Testis (tissue), 5 donors: ENCODE measurements at regions of chr3 and their contacts with region 1.

Region 1: DNA sequence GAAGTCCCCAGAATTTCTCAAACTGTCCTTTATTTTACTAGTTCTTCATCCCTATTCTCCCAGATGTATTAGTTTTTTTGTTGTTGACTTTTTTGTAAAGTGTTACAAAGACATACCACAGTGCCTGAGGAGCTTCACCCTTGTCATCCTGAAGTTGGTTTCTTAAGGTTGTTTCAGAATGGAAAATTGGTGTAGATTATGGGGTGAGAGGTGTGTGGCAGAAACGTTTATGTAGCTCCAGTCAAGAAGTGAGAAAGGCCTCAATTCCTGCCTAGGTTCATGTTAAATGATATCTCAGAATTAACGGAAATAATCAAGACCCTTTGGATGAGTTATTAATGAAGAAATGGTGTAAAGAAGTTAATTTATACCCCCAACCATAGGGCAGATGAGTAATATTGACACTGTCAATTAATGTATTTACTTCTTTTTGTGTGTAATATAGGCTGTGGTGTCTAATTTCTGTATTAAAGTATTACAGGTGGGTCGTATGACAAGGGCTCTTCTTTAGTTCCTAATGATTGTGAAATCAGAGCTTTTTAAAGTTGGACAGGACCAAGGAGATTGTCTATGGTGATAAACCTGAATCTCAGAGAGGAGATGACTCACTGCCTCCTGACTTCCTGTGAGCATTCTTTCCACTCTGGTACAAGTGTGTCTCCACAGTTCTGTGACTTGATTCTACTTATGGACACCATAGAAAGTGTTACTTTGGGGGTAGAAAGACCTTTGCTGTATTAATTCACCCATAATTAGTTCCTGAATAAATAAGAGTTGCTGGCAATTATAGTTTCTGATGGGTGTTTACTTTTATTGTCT is 7.0 kb downstream of the EDEM1 start:
- DNase-seq: no peak
- H3K4me3 ChIP-seq: no peak overlapping the region
- H3K27ac ChIP-seq: no peak overlapping the region
- H3K4me1 ChIP-seq: peaks cover 6% of the 10 kb centered on the region
- H3K27me3 ChIP-seq: no peaks in the 10 kb centered on the region
- CTCF ChIP-seq: no peak
- POLR2A ChIP-seq: no peak

Region 2: DNA sequence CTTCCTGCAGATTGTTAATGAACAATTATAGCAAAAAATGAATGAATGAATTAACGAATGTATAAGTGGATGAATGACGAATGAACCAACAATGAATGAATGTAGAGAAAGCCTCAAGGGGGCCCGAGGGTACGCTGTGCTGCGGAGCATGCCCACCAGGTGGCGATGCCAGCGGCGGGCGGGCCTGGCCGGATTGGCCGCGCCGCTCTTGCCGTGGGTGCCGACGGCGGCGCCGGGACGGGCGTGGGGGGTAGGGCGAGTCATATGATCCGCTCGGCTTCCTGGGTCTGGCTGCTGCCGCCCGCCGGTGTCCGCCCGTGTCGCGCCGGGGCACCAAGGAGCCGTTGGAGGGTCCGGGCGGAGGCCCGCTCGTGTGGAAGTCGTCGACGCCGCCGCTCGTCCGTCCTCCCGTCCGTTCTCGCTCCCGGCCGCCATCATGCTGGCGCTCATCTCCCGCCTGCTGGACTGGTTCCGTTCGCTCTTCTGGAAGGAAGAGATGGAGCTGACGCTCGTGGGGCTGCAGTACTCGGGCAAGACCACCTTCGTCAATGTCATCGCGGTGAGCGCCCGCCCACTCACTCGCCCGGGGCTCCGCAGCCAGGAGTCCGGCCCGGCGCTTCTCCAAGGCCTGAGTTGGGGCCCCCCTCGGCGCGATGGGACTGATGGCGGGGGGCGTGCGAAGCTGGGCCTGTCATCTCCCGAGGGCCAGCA is 72.4 kb before region 1 on chr3 and contains the start of gene ARL8B:
- intact Hi-C with region 1: loop called (anchors 10 kb)
- DNase-seq: peak; percentile 93
- H3K4me3 ChIP-seq: peak within 1 kb of the TSS; percentile 96 to 100
- H3K27ac ChIP-seq: peak within 1 kb of the TSS; percentile 83 to 95
- H3K4me1 ChIP-seq: peaks cover 19% of the 10 kb centered on the region
- H3K27me3 ChIP-seq: no peaks in the 10 kb centered on the region
- CTCF ChIP-seq: peak; percentile 98 to 99 (median 99)
- POLR2A ChIP-seq: no peak
- total RNA-seq, gene ARL8B: 50.1 to 54.5 TPM